ENCODE measurements at regions of chr12 and their contacts with region 1.

Region 1: DNA sequence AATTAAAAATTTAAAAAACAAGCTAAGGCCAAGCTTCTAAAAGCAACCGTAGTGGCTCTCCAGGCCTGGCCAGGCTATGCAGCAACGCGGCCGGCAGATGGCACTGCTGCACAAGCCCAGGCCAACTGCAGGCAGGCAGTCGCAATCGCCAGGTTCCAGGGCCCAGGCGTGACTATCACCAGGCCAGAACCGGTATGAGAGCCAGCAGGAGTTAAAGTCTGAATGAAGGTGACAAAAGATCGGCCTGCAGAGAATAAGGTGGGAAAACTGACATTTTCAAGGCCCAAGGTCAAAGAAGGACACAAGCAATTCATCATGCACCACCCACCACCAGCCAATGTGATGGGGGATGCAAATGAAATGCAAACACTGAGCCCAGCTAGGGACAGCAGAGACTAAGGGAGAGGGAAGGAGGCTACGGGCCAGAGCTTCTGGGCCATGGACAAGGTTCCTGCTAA is 43.6 kb upstream of the ANO2 start:
- DNase-seq: peak; percentile 83
- ATAC-seq: peak; percentile 91 to 93

Region 2: DNA sequence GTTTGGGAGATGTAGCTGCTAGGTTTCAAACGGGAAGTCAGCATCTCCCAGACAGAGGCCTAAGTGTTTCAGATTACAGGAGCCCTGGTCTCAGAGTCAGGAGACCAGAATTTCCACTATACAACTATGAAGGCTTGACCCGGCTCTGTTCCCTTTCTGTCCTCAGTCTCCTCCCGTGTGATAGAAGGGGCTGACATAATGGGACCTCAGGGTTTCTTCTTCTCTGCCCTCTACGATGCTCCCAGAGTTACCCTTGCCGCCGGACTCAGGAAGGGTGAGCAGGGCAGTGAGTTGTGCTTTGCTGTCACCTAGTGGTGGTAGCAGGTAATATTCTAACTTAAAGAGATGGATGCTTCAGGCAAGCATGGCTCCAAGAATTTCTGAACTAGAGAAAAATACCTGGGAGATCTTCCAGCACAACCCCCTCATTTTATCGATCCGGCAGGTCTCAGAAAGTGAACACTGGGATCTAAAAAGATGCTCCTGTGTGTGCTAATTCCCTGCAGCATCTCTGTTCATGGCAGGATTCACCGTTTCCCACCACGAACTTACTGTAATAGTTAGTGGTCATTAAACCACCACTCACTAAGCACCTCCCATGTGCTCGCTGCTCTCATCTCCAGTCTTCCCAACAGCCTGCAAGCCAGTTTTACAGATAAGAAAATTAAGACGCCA is 51.3 kb after region 1 on chr12:
- intact Hi-C with region 1: loop called (anchors 2 to 5 kb)
- DNase-seq: peak; percentile 62
- ATAC-seq: peak; percentile 71 to 83

Region 3: DNA sequence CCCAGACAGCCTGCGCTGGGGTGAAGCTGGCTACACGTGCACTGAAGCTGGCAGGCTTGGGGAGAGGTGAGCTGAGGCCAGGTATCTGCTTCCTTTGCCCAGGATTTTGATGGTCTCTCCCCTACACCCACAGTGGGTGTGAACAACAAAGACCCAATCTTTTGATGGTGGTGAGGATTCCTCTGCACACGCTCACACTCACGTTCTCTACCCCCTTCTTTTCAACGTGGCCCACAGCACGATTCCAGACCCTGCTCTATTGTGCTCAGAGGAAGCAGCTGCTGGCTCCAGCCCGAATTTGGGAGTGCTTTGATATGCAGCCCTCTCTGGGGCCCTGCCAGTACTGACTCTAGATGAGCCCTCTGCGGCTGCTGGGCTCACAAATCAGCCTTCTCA is 216.5 kb after region 1 on chr12:
- intact Hi-C with region 1: no loop called
- DNase-seq: peak; percentile 79
- ATAC-seq: peak; percentile 57 to 59

Region 4: GRCh38 chr12:6285063-6285477 is 296.4 kb after region 1 on chr12:
- intact Hi-C with region 1: loop called in 1 of 2 experiments (anchors 2 kb)
- DNase-seq: no peak
- ATAC-seq: peak; percentile 77 to 95